Upper lobe of right lung (tissue), 1 donor: ENCODE measurements at regions of chr2 and their contacts with region 1.

Region 1: DNA sequence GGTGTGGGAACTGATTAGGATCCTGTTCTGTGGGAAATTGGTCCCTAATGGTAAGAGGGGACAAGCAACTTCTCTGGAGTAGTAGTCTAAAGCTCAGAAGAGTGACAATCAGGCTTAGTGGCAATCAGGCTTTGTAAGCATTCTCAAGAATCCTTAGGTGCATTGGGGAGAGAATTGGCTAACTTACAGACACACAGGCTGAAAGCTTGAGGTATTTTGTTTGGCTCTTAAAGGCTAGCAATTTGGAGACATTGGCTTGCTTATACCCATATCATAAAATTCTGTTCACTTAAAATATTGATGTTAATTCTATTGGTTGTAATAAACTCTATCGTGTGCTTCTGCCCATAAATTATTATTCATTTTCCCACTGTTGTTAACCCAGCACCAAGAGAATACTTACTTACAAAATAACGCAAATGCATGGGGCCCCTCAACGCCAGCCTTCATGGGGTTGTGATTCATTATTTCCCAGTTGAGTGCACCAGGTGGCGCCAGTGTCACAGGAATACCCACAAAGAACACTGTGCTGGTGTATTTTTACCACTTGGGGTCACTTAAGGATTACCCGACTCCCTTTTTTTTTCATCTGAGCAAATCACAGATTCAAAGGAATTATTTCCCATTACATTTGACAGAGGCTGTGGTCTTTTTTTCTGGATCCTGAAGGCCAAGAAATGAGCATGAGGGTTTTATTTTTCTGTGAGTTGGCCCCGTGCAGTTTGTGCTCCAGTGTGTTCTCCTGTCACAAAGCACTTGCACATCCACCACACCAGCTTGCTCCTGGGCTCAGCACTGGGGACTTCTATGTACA is 45.5 kb downstream of the DDX1 start:
- DNase-seq: no peak
- ATAC-seq: peak; percentile 91
- H3K4me3 ChIP-seq: no peak overlapping the region
- H3K27ac ChIP-seq: no peak overlapping the region
- H3K4me1 ChIP-seq: peaks cover 30% of the 10 kb centered on the region
- H3K27me3 ChIP-seq: no peaks in the 10 kb centered on the region
- CTCF ChIP-seq: peak; percentile 90

Region 2: DNA sequence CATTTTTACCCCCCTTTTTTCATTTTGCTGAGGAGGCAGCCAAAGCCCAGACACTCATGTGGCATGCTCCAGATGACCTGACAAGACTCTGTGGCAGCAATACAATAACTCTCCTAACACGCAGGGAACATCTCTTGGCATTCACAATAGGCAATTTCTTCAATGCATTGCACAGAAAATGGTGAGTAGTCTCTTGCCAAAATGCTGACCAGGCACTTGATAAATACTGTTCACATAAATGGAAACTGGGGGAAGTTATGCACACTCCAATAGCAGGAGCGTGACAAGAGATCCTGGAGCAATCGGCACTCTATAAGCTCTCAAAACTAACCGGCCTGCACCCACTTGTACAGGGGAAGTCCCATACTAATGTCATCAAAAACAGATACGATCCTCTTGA is 142.3 kb before region 1 on chr2:
- intact Hi-C with region 1: no loop called
- DNase-seq: no peak
- ATAC-seq: no peak
- H3K4me3 ChIP-seq: no peak overlapping the region
- H3K27ac ChIP-seq: no peak overlapping the region
- H3K4me1 ChIP-seq: no peaks in the 10 kb centered on the region
- H3K27me3 ChIP-seq: no peaks in the 10 kb centered on the region
- CTCF ChIP-seq: no peak

Region 3: GRCh38 chr2:15939854-15940660 is 302.9 kb after region 1 on chr2 and contains the start of gene MYCN:
- intact Hi-C with region 1: loop called (anchors 5 kb)
- DNase-seq: no peak
- ATAC-seq: peak; percentile 25
- H3K4me3 ChIP-seq: peak within 1 kb of the TSS; percentile 52
- H3K27ac ChIP-seq: no peak within 1 kb of the TSS
- H3K4me1 ChIP-seq: peaks cover 40% of the 10 kb centered on the region
- H3K27me3 ChIP-seq: peaks cover 49% of the 10 kb centered on the region
- CTCF ChIP-seq: no peak
- total RNA-seq, gene MYCN: 0.49 TPM